H1 (cell line): ENCODE measurements at regions of chr10 and their contacts with region 1.

Region 1: DNA sequence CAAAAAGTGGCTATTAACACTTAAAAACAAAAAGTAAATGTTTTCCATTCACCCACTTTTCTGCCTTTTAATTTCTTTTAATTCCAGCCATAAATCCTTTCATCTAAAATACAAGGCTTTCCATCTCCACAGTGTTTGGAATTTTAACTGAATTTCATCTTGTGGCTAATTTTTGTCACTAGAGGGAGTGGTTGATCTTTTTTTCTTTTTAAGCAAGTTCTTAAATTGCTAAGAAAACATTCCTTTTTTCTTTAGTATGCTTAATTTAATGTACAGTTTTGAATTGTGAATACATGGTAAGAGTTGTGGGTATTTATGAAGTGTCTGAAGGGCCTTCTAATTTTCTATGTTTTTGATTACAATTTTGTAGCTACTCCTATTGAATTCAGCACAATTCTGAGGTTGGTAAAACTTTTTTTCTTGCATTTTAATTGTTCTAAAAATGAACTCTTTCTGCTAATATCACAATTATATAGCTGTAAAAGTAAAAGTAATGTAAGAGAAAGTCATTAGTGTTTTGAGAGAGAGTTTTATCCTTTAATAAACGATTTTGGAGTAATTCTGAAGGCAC is 54.9 kb upstream of the ANK3 start:
- DNase-seq: no peak
- H3K4me3 ChIP-seq: no peak overlapping the region
- H3K27ac ChIP-seq: no peak overlapping the region
- H3K4me1 ChIP-seq: peaks cover 0 to 5% (median 0%) of the 10 kb centered on the region in 4 experiments; a peak in 3 of 7 replicates
- H3K27me3 ChIP-seq: no peaks in the 10 kb centered on the region
- CTCF ChIP-seq: peak in 2 of 3 experiments; percentile 27 to 37; a peak in 2 of 4 replicates
- EP300 ChIP-seq: no peak
- POLR2A ChIP-seq: no peak
- RAD21 ChIP-seq: peak in 1 of 2 experiments; percentile 60; a peak in 3 of 4 replicates

Region 2: DNA sequence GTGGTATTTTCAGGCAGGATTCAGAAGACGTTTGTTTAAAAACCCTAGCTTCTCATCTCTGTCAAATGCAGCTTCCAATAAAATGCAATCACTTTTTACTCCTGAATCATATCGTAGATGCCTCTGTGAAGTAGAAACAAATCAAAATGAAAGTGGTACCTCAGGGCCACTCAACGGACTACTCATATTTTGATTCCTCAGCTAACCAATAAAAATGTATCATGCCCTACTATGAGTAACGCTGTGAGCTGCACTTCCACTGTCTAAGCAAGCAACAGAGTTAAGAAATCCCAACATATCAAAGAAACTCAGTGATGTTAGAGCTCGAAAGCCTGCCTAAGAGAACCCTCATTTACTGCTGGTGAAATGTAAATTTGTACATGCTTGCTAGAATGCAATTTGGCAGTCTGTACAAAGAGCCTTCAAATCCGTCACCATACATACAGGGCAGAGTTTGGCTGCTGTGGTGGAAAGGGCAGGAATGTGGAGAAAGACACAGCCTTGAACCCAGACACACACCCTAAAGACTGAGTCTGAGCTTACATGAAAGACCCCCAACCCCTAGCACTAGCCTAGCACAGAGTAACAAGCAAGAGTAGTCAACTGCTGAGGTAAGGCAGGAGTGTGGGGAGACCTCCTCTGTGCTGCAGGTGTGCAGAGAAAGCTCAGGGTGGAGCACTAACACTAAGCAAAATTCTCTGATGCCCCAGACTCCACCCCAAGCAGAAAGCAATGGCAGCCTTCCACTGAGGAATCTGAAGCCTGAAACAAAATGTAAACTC is 206.4 kb before region 1 on chr10:
- CTCF ChIA-PET with region 1: interaction called, 49 read pairs
- POLR2A ChIA-PET with region 1: no interaction called
- DNase-seq: peak in 1 of 2 experiments; percentile 10
- H3K4me3 ChIP-seq: no peak overlapping the region
- H3K27ac ChIP-seq: no peak overlapping the region
- H3K4me1 ChIP-seq: peaks cover 0 to 3% (median 0%) of the 10 kb centered on the region in 4 experiments; a peak in 3 of 7 replicates
- H3K27me3 ChIP-seq: no peaks in the 10 kb centered on the region
- CTCF ChIP-seq: peak; percentile 62 to 75 (median 64)
- EP300 ChIP-seq: no peak
- POLR2A ChIP-seq: no peak
- RAD21 ChIP-seq: peak; percentile 85 to 87

Region 3: GRCh38 chr10:60409202-60409601 is 35.4 kb before region 1 on chr10:
- CTCF ChIA-PET with region 1: no interaction called
- POLR2A ChIA-PET with region 1: no interaction called
- DNase-seq: no peak
- H3K4me3 ChIP-seq: no peak overlapping the region
- H3K27ac ChIP-seq: no peak overlapping the region
- H3K4me1 ChIP-seq: no peaks in the 10 kb centered on the region
- H3K27me3 ChIP-seq: no peaks in the 10 kb centered on the region
- CTCF ChIP-seq: no peak
- EP300 ChIP-seq: no peak
- POLR2A ChIP-seq: no peak
- RAD21 ChIP-seq: no peak

Region 4: GRCh38 chr10:60434418-60435046 is 10.0 kb before region 1 on chr10:
- CTCF ChIA-PET with region 1: interaction called, 17 read pairs
- POLR2A ChIA-PET with region 1: interaction called, 3 read pairs
- DNase-seq: no peak
- H3K4me3 ChIP-seq: no peak overlapping the region
- H3K27ac ChIP-seq: no peak overlapping the region
- H3K4me1 ChIP-seq: peaks cover 0 to 2% (median 0%) of the 10 kb centered on the region in 4 experiments; a peak in 1 of 7 replicates
- H3K27me3 ChIP-seq: no peaks in the 10 kb centered on the region
- CTCF ChIP-seq: peak in 2 of 3 experiments; percentile 64 to 67; a peak in 3 of 4 replicates
- EP300 ChIP-seq: no peak
- POLR2A ChIP-seq: no peak
- RAD21 ChIP-seq: peak; percentile 94 to 95

Region 5: GRCh38 chr10:60456053-60456452 is 11.5 kb after region 1 on chr10:
- CTCF ChIA-PET with region 1: interaction called, 18 read pairs
- POLR2A ChIA-PET with region 1: no interaction called
- DNase-seq: peak in 1 of 2 experiments; percentile 68
- H3K4me3 ChIP-seq: no peak overlapping the region
- H3K27ac ChIP-seq: no peak overlapping the region
- H3K4me1 ChIP-seq: no peaks in the 10 kb centered on the region; a peak in 1 of 7 replicates
- H3K27me3 ChIP-seq: peaks cover 0 to 1% (median 0%) of the 10 kb centered on the region in 4 experiments; a peak in 1 of 7 replicates
- CTCF ChIP-seq: peak; percentile 49 to 64 (median 54)
- EP300 ChIP-seq: no peak
- POLR2A ChIP-seq: no peak
- RAD21 ChIP-seq: peak; percentile 45 to 58

Region 6: DNA sequence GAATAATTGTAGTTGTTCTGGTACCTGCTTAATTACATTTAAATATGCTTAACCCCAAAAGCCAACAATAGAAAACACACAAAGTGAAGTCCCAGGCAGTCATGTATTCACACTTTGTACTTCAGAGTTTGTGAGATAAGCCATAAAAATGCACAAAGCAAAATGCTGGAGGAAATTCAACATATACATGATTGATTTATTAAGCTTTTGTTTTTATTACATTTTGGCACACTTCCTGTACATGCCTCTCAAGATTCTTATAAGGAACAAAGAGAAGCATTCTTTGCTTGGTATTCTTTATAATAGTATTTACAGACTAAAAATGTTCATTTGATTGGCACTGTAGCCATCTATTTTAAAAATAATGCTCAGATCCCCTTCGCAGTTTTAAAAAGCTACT is 52.8 kb after region 1 on chr10:
- CTCF ChIA-PET with region 1: no interaction called
- POLR2A ChIA-PET with region 1: no interaction called
- DNase-seq: no peak
- H3K4me3 ChIP-seq: no peak overlapping the region
- H3K27ac ChIP-seq: no peak overlapping the region
- H3K4me1 ChIP-seq: peaks cover 0 to 2% (median 0%) of the 10 kb centered on the region in 4 experiments; a peak in 1 of 7 replicates
- H3K27me3 ChIP-seq: no peaks in the 10 kb centered on the region
- CTCF ChIP-seq: no peak
- EP300 ChIP-seq: no peak
- POLR2A ChIP-seq: no peak
- RAD21 ChIP-seq: no peak

Region 7: DNA sequence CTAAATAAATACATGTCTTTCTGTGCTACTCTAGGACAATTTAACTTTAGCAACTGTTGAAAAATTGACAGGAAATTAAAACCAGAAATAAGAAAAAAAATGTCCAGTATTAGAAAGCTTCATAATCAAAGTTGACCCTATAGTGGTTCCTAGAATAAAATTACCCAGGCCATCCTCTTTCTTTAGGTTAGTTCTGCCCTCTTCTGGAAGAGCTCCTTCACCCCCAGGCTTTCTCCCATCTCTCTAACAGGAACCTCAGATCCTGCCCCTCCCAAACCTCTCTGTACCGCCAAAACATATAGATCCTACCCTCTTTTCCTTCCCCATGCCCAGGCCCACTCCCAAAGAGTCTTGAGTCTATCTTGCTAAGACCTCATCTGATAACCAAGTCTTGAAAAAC is 174.3 kb after region 1 on chr10:
- CTCF ChIA-PET with region 1: interaction called, 21 read pairs
- POLR2A ChIA-PET with region 1: no interaction called
- DNase-seq: no peak
- H3K4me3 ChIP-seq: no peak overlapping the region
- H3K27ac ChIP-seq: no peak overlapping the region
- H3K4me1 ChIP-seq: no peaks in the 10 kb centered on the region
- H3K27me3 ChIP-seq: no peaks in the 10 kb centered on the region
- CTCF ChIP-seq: peak in 1 of 3 experiments; percentile 13; a peak in 3 of 4 replicates
- EP300 ChIP-seq: no peak
- POLR2A ChIP-seq: no peak
- RAD21 ChIP-seq: peak; percentile 36 to 59; a peak in 3 of 4 replicates

Region 8: GRCh38 chr10:60646966-60647796 is 202.6 kb after region 1 on chr10:
- CTCF ChIA-PET with region 1: interaction called, 57 read pairs
- POLR2A ChIA-PET with region 1: no interaction called
- DNase-seq: no peak
- H3K4me3 ChIP-seq: no peak overlapping the region
- H3K27ac ChIP-seq: no peak overlapping the region
- H3K4me1 ChIP-seq: peaks cover 0 to 9% (median 6%) of the 10 kb centered on the region in 4 experiments; a peak in 3 of 7 replicates
- H3K27me3 ChIP-seq: no peaks in the 10 kb centered on the region
- CTCF ChIP-seq: peak in 2 of 3 experiments; percentile 52 to 64; a peak in 3 of 4 replicates
- EP300 ChIP-seq: no peak
- POLR2A ChIP-seq: no peak
- RAD21 ChIP-seq: peak; percentile 79 to 82

Region 9: GRCh38 chr10:60769406-60769805 is 324.8 kb after region 1 on chr10:
- CTCF ChIA-PET with region 1: interaction called, 13 read pairs
- POLR2A ChIA-PET with region 1: no interaction called
- DNase-seq: no peak
- H3K4me3 ChIP-seq: no peak overlapping the region
- H3K27ac ChIP-seq: no peak overlapping the region
- H3K4me1 ChIP-seq: no peaks in the 10 kb centered on the region; a peak in 1 of 7 replicates
- H3K27me3 ChIP-seq: no peaks in the 10 kb centered on the region
- CTCF ChIP-seq: no peak
- EP300 ChIP-seq: no peak
- POLR2A ChIP-seq: no peak
- RAD21 ChIP-seq: no peak